ENCODE measurements at regions of chr13 and their contacts with region 1.

Region 1: DNA sequence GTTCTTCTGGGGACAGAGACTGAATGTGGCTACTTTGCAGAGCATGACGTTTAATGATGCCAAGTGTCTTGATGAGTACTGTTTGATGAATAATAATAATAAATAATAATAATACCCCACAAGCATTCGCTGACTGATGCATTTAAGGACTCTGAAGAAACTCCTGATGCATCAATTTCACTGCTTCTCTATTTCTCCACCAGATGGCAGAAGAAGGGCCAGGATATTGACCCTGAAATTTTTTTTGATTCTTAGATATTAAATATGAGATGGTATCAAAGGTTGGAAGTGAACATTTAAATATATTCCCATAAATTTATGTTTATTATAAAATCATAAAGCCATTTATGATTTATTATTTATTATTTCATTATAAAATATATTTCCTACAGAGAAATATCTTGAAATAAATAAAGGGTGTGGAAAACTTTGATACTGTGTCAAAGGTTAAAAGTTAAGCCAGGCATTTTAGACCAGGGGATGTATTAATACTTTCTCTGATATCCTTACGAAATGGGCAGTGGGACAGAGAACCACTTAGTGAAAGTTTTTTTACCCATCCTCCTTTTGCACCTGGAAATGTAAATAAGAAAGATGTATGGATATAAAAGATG is 170.9 kb downstream of the LACC1 start:
- DNase-seq: no peak
- H3K4me3 ChIP-seq: no peak overlapping the region
- H3K27ac ChIP-seq: peak overlapping the region in 1 of 4 donors; percentile 52
- H3K4me1 ChIP-seq: peaks cover 0 to 31% (median 27%) of the 10 kb centered on the region in 4 donors
- H3K27me3 ChIP-seq: no peaks in the 10 kb centered on the region
- CTCF ChIP-seq: peak; percentile 60 to 86 (median 72)
- EP300 ChIP-seq: no peak
- POLR2A ChIP-seq: no peak

Region 2: DNA sequence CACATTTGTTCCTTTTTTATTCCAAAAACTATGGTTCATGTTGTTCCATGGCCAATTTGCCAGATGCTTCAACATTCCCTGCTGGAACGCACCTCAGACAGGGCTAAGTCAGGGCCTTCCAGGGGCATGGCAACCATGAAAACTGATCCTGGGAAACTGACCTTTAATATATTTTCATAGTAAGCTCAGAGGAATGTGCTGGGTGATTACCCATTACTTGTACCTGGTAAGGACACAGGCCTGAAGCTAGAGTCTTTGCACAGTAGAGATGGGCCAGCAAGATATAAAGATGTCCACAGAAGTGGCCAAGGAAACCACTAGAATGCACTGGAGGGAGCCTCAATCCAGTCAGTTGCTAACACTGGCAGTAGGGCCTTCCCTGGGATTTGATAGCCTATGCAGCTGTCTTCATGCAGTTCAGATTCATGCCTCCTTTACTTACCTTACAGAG is 616.8 kb before region 1 on chr13:
- intact Hi-C with region 1: no loop called
- DNase-seq: no peak
- H3K4me3 ChIP-seq: no peak overlapping the region
- H3K27ac ChIP-seq: no peak overlapping the region
- H3K4me1 ChIP-seq: peaks cover 0 to 34% (median 16%) of the 10 kb centered on the region in 4 donors
- H3K27me3 ChIP-seq: no peaks in the 10 kb centered on the region
- CTCF ChIP-seq: no peak
- EP300 ChIP-seq: no peak
- POLR2A ChIP-seq: no peak

Region 3: DNA sequence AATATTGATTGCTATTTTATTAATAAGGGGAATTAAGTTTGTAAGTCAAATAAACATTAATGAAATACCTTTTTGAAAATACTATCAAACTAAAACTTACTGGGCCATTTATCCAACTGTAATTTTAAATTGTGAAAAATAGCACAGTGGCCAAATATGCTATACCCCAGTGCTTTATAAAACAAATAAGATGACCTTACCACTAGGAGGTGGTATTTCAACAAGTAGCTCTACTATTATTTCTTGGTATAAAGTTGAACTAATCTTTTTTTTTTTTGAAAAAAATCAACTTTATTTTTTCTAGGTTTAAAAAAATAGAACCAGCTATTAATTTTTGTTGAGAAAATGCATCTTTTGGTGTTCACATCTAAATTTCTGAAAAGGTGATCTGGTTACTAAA is 156.1 kb before region 1 on chr13:
- intact Hi-C with region 1: no loop called
- DNase-seq: no peak
- H3K4me3 ChIP-seq: no peak overlapping the region
- H3K27ac ChIP-seq: no peak overlapping the region
- H3K4me1 ChIP-seq: no peaks in the 10 kb centered on the region
- H3K27me3 ChIP-seq: no peaks in the 10 kb centered on the region
- CTCF ChIP-seq: no peak
- EP300 ChIP-seq: no peak
- POLR2A ChIP-seq: no peak

Region 4: GRCh38 chr13:43905435-43906031 is 145.0 kb before region 1 on chr13:
- intact Hi-C with region 1: loop called (anchors 5 kb)
- DNase-seq: no peak
- H3K4me3 ChIP-seq: no peak overlapping the region
- H3K27ac ChIP-seq: no peak overlapping the region
- H3K4me1 ChIP-seq: peaks cover 0 to 12% (median 5%) of the 10 kb centered on the region in 4 donors
- H3K27me3 ChIP-seq: no peaks in the 10 kb centered on the region
- CTCF ChIP-seq: peak; percentile 66 to 80 (median 76)
- EP300 ChIP-seq: no peak
- POLR2A ChIP-seq: no peak

Region 5: DNA sequence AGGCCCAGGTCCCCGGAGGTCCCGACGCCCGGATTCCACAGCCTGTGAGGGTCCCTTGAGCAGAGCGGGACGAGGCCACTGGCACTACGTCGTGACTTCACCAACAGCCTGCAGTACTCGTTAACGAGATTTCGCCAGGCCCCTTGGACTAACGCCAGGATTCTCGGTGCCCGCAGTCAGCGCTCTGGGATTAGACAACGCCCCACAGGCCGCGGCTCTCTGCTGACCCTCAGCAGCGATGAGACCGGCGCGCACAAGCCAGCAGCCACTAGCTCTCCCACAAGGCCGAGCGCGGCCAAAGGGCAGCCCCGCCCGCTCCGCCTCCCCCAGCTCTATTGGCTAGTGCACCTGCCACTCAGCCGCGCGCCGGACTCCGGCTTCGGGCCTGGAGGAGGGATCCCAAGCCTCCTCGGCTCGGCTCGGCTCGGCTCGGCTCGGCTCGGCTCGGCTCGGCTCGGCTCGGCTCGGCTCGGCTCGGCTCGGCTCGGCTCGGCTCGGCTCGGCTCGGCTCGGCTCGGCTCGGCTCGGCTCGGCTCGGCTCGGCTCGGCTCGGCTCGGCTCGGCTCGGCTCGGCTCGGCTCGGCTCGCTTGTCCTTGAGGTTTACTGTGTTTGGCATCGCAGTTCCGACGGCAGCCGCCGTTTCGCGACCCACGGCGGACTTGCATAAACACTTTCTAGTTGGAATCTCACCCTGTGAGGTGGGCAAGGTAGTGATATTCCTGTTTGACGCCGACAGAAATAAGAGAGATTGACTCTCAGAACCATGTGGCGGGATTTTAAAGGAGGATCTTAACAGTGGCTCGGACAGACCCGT is 91.4 kb after region 1 on chr13:
- intact Hi-C with region 1: loop called (anchors 5 kb)
- DNase-seq: peak; percentile 99
- H3K4me3 ChIP-seq: peak overlapping the region; percentile 43 to 57 (median 52)
- H3K27ac ChIP-seq: peak overlapping the region; percentile 86 to 95 (median 90)
- H3K4me1 ChIP-seq: peaks cover 0 to 17% (median 10%) of the 10 kb centered on the region in 4 donors
- H3K27me3 ChIP-seq: no peaks in the 10 kb centered on the region
- CTCF ChIP-seq: peak in 1 of 4 experiments; percentile 32
- EP300 ChIP-seq: no peak
- POLR2A ChIP-seq: peak; percentile 91 to 93

Region 6: DNA sequence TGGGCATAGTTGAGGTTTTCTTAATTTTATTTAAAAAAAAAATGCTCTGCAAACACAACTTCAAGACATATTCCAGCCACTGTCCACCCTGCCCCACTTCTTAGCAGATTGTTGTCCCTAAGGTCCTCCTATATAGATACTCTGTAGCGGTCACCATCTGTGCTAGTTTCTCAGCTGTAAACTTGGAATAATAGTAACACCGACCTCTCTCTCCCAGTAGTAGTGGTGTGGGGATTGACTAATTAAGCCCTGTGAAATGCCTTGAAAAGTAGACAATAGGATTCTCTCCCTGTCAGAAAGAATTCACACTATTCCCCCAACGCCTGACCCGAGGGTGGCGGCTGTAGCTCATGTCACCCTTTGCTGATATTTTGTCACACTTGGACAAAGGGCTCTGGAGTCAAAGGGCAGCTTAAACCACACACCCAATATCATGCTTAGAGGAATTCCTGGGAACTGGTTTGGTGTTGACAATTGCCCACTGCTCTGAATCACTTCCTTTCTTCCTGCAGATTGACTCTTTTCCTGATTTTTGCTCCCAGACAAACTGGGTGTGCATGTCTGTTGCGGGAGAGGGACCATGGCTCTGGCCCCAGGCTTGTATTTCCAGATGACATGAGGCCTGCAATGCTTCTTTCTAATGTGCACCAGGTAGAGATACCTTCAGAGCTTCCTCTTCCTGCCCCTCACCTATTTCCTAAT is 313.9 kb after region 1 on chr13:
- intact Hi-C with region 1: loop called (anchors 5 kb)
- DNase-seq: no peak
- H3K4me3 ChIP-seq: no peak overlapping the region
- H3K27ac ChIP-seq: peak overlapping the region in 3 of 4 donors; percentile 4 to 43 (median 14)
- H3K4me1 ChIP-seq: peaks cover 0 to 36% (median 22%) of the 10 kb centered on the region in 4 donors
- H3K27me3 ChIP-seq: no peaks in the 10 kb centered on the region
- CTCF ChIP-seq: no peak
- EP300 ChIP-seq: no peak
- POLR2A ChIP-seq: no peak